CD4-positive, alpha-beta T cell (primary cell): ENCODE measurements at regions of chr3 and their contacts with region 1.

Region 1: DNA sequence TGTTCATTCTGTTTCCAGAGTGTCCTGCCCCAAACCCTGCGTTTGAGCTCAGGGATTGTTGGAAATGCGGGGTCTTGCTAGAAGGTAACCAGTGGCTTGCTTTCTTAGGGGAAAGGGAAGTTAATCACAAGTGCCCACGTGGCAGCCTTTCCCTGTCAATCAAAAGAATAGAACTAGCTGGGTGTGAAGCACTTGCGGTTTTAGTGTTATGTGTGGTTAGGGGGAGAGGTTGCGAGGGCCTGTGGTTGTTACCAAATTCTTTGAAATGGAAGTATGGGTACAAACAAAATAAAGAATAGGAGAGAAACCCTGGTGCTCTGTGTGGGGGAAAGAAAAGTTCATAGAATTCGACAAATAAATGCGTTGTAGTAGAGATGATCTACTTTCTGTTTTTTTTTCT is 67.6 kb downstream of the FNDC3B start:
- DNase-seq: peak; percentile 26 to 90 (median 46)
- ATAC-seq: peak; percentile 56
- H3K4me3 ChIP-seq: peak overlapping the region; percentile 32
- H3K4me3 Mint-ChIP-seq: peak overlapping the region; percentile 83
- H3K27ac ChIP-seq: peak overlapping the region; percentile 31 to 39
- H3K27ac Mint-ChIP-seq: peak overlapping the region; percentile 79
- H3K4me1 ChIP-seq: peaks cover 58% of the 10 kb centered on the region
- H3K4me1 Mint-ChIP-seq: peaks cover 84% of the 10 kb centered on the region
- H3K27me3 ChIP-seq: no peaks in the 10 kb centered on the region
- H3K27me3 Mint-ChIP-seq: no peaks in the 10 kb centered on the region
- CTCF ChIP-seq: no peak

Region 2: DNA sequence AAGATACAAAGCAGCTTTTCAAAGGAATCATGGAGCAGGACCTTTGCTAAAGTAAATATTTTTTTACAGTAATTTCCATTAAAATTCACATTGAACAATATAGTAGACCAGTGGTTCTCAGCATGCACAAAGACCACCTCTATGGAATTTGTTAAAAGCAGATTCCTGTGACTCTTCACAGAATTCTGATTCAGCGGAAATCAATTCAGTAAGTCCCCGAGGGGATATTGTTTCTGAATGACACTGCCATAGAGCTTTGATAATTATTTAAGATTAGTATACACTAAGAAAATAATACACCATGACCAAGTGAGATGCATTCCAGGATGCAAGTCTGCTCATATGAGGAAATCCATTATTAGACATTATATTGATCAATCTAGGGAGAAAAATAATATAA is 484.9 kb before region 1 on chr3:
- CTCF ChIA-PET with region 1: no interaction called
- POLR2A ChIA-PET with region 1: no interaction called
- intact Hi-C with region 1: no loop called
- DNase-seq: no peak
- ATAC-seq: no peak
- H3K4me3 ChIP-seq: no peak overlapping the region
- H3K4me3 Mint-ChIP-seq: no peak overlapping the region
- H3K27ac ChIP-seq: no peak overlapping the region
- H3K27ac Mint-ChIP-seq: no peak overlapping the region
- H3K4me1 ChIP-seq: no peaks in the 10 kb centered on the region
- H3K4me1 Mint-ChIP-seq: no peaks in the 10 kb centered on the region
- H3K27me3 ChIP-seq: no peaks in the 10 kb centered on the region
- H3K27me3 Mint-ChIP-seq: peaks cover 4% of the 10 kb centered on the region
- CTCF ChIP-seq: no peak

Region 3: DNA sequence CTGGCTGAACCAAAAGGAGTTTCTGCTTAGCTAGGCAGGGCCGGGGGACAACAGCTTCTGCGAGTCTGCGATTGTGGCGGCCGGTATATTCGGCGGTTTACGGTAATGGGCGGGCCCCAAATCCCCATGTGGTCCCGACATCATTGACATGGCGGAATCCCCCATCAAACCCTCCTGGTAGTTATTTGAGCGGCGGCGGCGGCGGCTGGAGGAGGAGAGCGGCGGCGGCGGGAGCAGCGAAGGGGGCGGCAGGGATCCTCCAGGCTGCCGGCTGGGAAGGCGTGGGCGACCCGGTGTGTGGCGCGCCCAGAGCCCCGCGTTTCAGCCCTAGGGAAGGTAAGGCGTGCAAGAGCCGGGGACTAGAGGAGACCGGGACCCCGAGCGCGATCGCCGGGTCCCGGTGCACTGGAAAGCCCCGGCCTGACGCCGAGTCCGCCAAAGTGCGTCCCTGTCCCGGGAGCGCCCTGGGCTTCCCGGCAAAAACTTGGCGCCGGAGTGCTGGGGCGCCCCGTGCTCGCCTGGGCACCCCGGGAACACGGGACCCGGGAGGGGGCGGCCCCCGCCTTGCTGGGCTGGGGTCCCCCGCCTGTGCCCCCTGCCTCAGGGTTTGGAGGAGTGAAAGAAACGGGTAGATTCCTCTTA is 67.4 kb before region 1 on chr3 and contains the start of gene FNDC3B:
- CTCF ChIA-PET with region 1: interaction called, 5 read pairs
- POLR2A ChIA-PET with region 1: interaction called, 13 read pairs
- intact Hi-C with region 1: loop called (anchors 1 to 2 kb)
- DNase-seq: peak; percentile 81 to 96 (median 88)
- ATAC-seq: peak; percentile 93
- H3K4me3 ChIP-seq: peak within 1 kb of the TSS; percentile 91
- H3K4me3 Mint-ChIP-seq: peak within 1 kb of the TSS; percentile 100
- H3K27ac ChIP-seq: peak within 1 kb of the TSS; percentile 71 to 86
- H3K27ac Mint-ChIP-seq: peak within 1 kb of the TSS; percentile 92
- H3K4me1 ChIP-seq: peaks cover 25% of the 10 kb centered on the region
- H3K4me1 Mint-ChIP-seq: peaks cover 53% of the 10 kb centered on the region
- H3K27me3 ChIP-seq: no peaks in the 10 kb centered on the region
- H3K27me3 Mint-ChIP-seq: peaks cover 5% of the 10 kb centered on the region
- CTCF ChIP-seq: no peak
- total RNA-seq, gene FNDC3B: 26.1 to 28.7 TPM

Region 4: DNA sequence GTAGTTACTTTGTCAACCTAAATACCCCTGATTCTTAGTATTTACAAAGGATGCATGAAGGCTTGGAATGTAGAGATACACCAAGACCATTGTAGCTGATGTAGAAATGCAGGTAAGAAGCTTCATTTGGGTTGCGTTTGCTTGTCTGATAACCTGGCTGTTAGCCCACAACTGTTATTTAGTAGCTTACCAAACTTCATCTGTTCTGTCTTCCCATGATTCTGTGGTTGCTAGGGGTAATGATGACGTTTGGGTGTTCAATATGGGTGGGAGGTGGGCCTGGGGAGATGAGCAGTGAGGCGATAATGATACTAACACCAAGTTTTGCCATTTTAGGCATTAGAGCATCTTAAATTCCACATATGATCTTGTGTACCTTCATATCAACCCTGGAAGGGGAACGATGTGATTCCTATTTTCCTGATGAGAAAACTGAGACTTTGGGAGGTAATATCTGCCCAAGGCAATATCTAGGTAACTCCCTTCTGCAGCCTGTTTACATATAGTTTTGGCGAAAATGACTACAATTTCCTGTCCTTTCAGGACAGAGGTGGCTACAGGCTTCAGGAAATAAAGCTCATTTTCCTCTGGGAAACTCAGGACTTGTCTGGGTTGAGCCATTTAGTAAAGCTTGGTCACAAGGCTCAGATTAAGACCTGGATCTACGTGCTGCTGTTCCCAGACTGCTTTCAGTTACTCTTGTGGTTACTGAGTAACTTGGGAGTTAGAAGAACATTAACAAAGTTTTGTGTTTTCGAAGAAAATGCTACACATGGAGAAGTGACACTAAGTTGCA is 40.8 kb before region 1 on chr3:
- CTCF ChIA-PET with region 1: no interaction called
- POLR2A ChIA-PET with region 1: no interaction called
- intact Hi-C with region 1: loop called in 1 of 2 experiments (anchors 5 kb)
- DNase-seq: no peak
- ATAC-seq: no peak
- H3K4me3 ChIP-seq: no peak overlapping the region
- H3K4me3 Mint-ChIP-seq: no peak overlapping the region
- H3K27ac ChIP-seq: no peak overlapping the region
- H3K27ac Mint-ChIP-seq: no peak overlapping the region
- H3K4me1 ChIP-seq: peaks cover 4% of the 10 kb centered on the region
- H3K4me1 Mint-ChIP-seq: peaks cover 38% of the 10 kb centered on the region
- H3K27me3 ChIP-seq: no peaks in the 10 kb centered on the region
- H3K27me3 Mint-ChIP-seq: no peaks in the 10 kb centered on the region
- CTCF ChIP-seq: no peak

Region 5: DNA sequence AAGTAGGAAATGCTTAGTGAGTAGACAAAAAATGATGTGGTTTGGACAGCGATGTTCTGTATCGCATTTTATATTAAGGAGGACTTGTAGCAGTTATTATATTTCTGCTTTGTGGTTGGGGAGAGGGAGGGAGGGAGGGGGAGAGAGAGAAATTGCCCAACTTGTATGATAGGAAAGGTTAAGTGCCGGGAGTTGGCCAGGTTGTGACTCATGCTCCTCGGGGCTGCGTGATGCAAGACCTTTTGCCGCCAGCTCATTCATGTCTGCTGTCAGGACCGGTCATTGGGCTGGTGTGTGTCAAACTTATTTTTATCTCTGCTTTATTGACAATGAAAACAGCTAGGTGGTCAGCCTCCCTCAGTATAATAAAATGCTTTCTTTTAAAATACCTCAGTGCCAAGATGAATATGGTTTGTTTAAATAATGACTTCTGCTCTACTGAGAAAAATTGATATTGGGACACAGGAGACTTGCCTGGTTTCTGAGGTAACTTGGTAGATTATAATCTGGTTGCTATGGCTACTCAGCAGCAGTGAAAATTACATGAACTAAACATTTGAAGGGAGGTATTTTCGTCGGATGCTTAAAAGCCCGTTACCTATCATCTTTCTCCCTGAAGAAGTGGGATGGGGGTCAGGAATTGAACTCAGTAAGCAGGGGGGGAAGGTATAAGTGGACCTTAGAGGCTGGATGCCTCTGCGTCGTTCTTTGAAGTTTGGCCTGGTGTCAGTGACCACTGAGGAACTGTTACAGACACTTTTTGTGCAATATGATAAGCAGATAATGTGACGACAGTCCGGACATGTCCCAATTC is 23.1 kb after region 1 on chr3:
- CTCF ChIA-PET with region 1: interaction called, 5 read pairs
- POLR2A ChIA-PET with region 1: interaction called, 18 read pairs
- intact Hi-C with region 1: no loop called
- DNase-seq: peak in 10 of 14 experiments; percentile 19 to 90 (median 46)
- ATAC-seq: peak; percentile 74
- H3K4me3 ChIP-seq: no peak overlapping the region
- H3K4me3 Mint-ChIP-seq: peak overlapping the region; percentile 42
- H3K27ac ChIP-seq: peak overlapping the region in 1 of 2 donors; percentile 79
- H3K27ac Mint-ChIP-seq: peak overlapping the region; percentile 78
- H3K4me1 ChIP-seq: peaks cover 26% of the 10 kb centered on the region
- H3K4me1 Mint-ChIP-seq: peaks cover 44% of the 10 kb centered on the region
- H3K27me3 ChIP-seq: no peaks in the 10 kb centered on the region
- H3K27me3 Mint-ChIP-seq: no peaks in the 10 kb centered on the region
- CTCF ChIP-seq: no peak